Naive thymus-derived CD4-positive, alpha-beta T cell (primary cell): ENCODE measurements at regions of chr16 and their contacts with region 1.

Region 1: GRCh38 chr16:84738255-84739038 is 38.6 kb downstream of the USP10 start:
- DNase-seq: peak; percentile 49 to 77 (median 72)
- ATAC-seq: peak; percentile 85
- H3K4me3 ChIP-seq: no peak overlapping the region
- H3K4me3 Mint-ChIP-seq: peak overlapping the region in 6 of 10 donors; percentile 6 to 76 (median 38)
- H3K27ac ChIP-seq: no peak overlapping the region
- H3K27ac Mint-ChIP-seq: peak overlapping the region in 8 of 9 donors; percentile 21 to 81 (median 64)
- H3K4me1 ChIP-seq: peaks cover 0 to 23% of the 10 kb centered on the region in 2 donors
- H3K4me1 Mint-ChIP-seq: peaks cover 38 to 61% (median 55%) of the 10 kb centered on the region in 7 donors
- H3K27me3 ChIP-seq: no peaks in the 10 kb centered on the region
- H3K27me3 Mint-ChIP-seq: no peaks in the 10 kb centered on the region

Region 2: GRCh38 chr16:84103678-84104077 is 634.8 kb before region 1 on chr16:
- CTCF ChIA-PET with region 1: no interaction called
- POLR2A ChIA-PET with region 1: no interaction called
- intact Hi-C with region 1: no loop called
- DNase-seq: no peak
- ATAC-seq: no peak
- H3K4me3 ChIP-seq: no peak overlapping the region
- H3K4me3 Mint-ChIP-seq: no peak overlapping the region
- H3K27ac ChIP-seq: no peak overlapping the region
- H3K27ac Mint-ChIP-seq: peak overlapping the region in 3 of 9 donors; percentile 4 to 34 (median 20)
- H3K4me1 ChIP-seq: peaks cover 0 to 4% of the 10 kb centered on the region in 2 donors
- H3K4me1 Mint-ChIP-seq: peaks cover 30 to 76% (median 66%) of the 10 kb centered on the region in 7 donors
- H3K27me3 ChIP-seq: no peaks in the 10 kb centered on the region
- H3K27me3 Mint-ChIP-seq: no peaks in the 10 kb centered on the region

Region 3: DNA sequence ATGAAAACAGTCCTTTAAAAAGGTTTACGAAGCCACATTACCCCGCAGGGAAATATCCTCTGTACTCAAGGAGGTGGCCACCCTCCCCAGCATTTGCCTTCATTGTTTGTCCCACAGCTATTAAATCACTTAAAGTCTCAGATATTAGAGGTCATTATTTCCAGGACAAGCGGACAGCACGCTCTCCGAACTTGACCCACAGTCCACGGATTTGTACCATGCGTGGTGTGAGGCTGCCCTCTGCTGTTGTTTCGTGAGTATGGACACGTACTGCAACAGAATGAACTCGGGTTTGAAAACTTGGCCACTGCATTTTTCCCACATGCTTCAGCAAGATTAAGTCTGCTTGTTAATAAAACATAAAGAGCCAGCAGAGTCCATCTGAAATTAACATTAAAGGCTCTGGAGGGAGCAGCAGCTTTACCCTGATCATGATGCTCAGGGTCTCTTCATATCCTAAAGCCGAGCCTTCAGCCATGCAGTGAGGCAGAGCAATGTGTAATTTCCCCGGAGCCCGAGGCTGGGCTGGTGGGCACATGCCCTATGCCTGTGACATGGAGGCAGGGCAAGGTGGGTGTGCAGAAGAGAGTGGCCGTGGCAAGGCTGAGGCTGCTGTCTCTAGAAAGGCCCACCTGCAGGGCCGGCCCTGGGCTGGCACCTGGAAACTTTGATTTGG is 253.7 kb before region 1 on chr16:
- CTCF ChIA-PET with region 1: no interaction called
- POLR2A ChIA-PET with region 1: no interaction called
- intact Hi-C with region 1: no loop called
- DNase-seq: peak in 1 of 9 donors; percentile 23
- ATAC-seq: no peak
- H3K4me3 ChIP-seq: no peak overlapping the region
- H3K4me3 Mint-ChIP-seq: no peak overlapping the region
- H3K27ac ChIP-seq: no peak overlapping the region
- H3K27ac Mint-ChIP-seq: no peak overlapping the region
- H3K4me1 ChIP-seq: no peaks in the 10 kb centered on the region
- H3K4me1 Mint-ChIP-seq: peaks cover 0 to 2% (median 0%) of the 10 kb centered on the region in 7 donors
- H3K27me3 ChIP-seq: no peaks in the 10 kb centered on the region
- H3K27me3 Mint-ChIP-seq: no peaks in the 10 kb centered on the region

Region 4: DNA sequence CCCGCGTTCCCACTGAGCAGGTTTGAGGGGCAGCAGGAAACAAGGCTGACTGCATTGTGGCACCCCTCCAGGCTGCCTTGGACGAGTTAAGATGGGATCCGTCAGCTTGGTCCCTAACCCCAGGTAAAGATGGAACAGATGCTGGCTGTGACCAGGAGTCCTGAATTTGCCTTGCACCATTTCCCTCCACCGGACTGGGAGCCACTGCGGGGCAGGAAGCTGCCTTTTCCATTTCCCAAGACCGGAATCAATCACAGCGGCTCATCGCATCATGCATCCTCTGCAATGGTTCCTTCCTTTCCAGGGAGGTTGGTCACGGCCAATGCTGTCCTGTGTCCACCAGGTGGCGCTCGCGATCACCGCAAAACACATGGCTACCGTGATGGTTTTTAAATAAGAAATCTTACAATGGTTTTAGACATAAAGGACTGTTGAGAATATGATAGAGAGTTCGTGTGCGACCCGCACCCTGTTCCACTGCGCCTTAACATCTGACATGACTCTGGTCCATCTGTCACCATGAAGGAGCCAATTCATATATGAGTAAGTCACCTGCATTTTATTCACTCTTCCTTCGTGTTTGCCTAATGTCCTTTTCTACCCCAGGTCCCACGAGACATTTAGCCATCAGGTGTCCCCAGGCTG is 227.1 kb before region 1 on chr16:
- CTCF ChIA-PET with region 1: interaction called, 18 read pairs
- POLR2A ChIA-PET with region 1: interaction called, 3 read pairs
- intact Hi-C with region 1: loop called in 1 of 2 experiments (anchors 1 kb)
- DNase-seq: peak; percentile 55 to 88 (median 79)
- ATAC-seq: peak; percentile 62
- H3K4me3 ChIP-seq: no peak overlapping the region
- H3K4me3 Mint-ChIP-seq: peak overlapping the region in 9 of 10 donors; percentile 11 to 71 (median 62)
- H3K27ac ChIP-seq: no peak overlapping the region
- H3K27ac Mint-ChIP-seq: peak overlapping the region; percentile 55 to 94 (median 82)
- H3K4me1 ChIP-seq: peaks cover 53 to 77% of the 10 kb centered on the region in 2 donors
- H3K4me1 Mint-ChIP-seq: peaks cover 48 to 79% (median 74%) of the 10 kb centered on the region in 7 donors
- H3K27me3 ChIP-seq: no peaks in the 10 kb centered on the region
- H3K27me3 Mint-ChIP-seq: no peaks in the 10 kb centered on the region

Region 5: GRCh38 chr16:84672276-84673202 is 65.9 kb before region 1 on chr16:
- CTCF ChIA-PET with region 1: interaction called, 13 read pairs
- POLR2A ChIA-PET with region 1: interaction called, 3 read pairs
- intact Hi-C with region 1: loop called (anchors 1 kb)
- DNase-seq: peak; percentile 58 to 85 (median 74)
- ATAC-seq: peak; percentile 96
- H3K4me3 ChIP-seq: no peak overlapping the region
- H3K4me3 Mint-ChIP-seq: no peak overlapping the region
- H3K27ac ChIP-seq: no peak overlapping the region
- H3K27ac Mint-ChIP-seq: peak overlapping the region in 3 of 9 donors; percentile 6 to 54 (median 52)
- H3K4me1 ChIP-seq: no peaks in the 10 kb centered on the region
- H3K4me1 Mint-ChIP-seq: peaks cover 5 to 17% (median 8%) of the 10 kb centered on the region in 7 donors
- H3K27me3 ChIP-seq: no peaks in the 10 kb centered on the region
- H3K27me3 Mint-ChIP-seq: peaks cover 0 to 19% (median 0%) of the 10 kb centered on the region in 5 donors

Region 6: DNA sequence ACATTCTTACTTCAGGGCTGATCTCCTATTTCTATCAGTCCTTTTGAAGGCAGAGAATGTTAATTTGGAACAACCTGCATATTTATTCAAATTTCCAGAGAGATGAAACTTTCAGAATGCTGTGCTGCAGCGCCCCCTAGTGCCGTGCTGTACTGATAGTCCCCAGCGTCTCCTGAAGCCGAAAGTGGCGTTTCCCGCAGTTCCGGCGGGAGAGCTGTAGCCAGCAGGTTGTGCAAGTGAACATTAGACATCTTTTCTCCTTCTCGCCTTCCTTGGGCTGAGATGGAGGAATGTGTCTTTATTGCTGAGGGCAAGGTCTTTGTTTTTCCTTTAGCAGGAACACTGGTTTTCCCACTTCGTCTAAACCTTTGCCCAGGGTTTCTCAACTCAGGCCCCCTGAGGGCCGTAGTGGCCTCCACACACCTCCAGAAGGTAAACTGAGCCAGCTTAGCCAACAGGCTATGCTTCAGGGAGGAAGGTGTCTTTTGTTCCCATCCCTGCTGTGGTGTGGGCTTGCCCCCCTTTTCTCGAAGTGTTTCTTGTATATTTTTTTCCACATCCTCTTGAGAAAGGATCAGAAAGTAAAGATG is 12.3 kb before region 1 on chr16:
- CTCF ChIA-PET with region 1: interaction called, 19 read pairs
- POLR2A ChIA-PET with region 1: interaction called, 7 read pairs
- intact Hi-C with region 1: loop called in 1 of 2 experiments (anchors 1 kb)
- DNase-seq: peak; percentile 61 to 83 (median 74)
- ATAC-seq: peak; percentile 92
- H3K4me3 ChIP-seq: no peak overlapping the region
- H3K4me3 Mint-ChIP-seq: peak overlapping the region in 8 of 10 donors; percentile 54 to 76 (median 60)
- H3K27ac ChIP-seq: no peak overlapping the region
- H3K27ac Mint-ChIP-seq: peak overlapping the region in 4 of 9 donors; percentile 6 to 41 (median 31)
- H3K4me1 ChIP-seq: peaks cover 8 to 26% of the 10 kb centered on the region in 2 donors
- H3K4me1 Mint-ChIP-seq: peaks cover 55 to 83% (median 69%) of the 10 kb centered on the region in 7 donors
- H3K27me3 ChIP-seq: no peaks in the 10 kb centered on the region
- H3K27me3 Mint-ChIP-seq: no peaks in the 10 kb centered on the region

Region 7: DNA sequence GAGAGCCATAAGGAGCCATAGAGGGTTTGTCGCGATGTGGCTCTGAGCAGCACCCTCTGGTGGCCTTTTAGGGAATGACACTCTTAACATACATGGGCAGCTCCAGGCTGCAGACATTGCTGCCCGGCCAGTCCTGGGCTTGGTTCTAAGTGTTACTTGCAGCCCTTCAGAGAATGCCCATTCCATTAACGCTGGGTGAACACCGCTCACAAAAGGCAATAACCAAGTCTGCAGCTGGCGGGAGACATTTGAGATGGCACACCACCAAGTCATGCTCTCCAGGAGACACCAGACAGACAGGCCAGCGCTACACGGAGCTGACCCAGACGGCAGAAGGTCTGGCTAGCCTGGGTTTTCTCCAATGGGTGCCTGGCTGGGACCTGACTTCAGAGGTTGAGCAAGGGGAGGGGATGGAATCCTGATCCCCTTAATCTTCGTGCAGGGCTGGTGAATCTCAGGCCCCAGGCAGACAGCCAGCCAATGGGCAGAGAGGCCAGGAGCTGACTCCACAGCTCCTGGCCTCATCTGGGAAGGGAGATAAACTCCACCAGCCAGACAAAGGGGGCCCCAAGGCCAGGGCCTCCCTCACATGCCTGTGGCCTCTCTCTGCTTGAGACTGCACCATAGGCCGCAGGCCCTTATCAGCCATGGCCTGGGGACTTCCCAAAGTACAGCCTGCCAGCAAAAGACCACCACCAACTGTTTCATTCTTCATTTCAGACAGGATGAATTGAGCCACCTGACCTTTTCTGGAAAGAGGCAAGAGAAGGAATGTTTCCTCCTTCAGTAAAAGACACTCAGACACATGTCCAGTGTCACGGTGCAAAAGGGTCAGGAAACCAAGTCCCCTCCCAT is 214.1 kb after region 1 on chr16:
- CTCF ChIA-PET with region 1: interaction called, 5 read pairs
- POLR2A ChIA-PET with region 1: no interaction called
- intact Hi-C with region 1: loop called in 1 of 2 experiments (anchors 1 kb)
- DNase-seq: peak; percentile 28 to 80 (median 68)
- ATAC-seq: peak; percentile 94
- H3K4me3 ChIP-seq: no peak overlapping the region
- H3K4me3 Mint-ChIP-seq: no peak overlapping the region
- H3K27ac ChIP-seq: no peak overlapping the region
- H3K27ac Mint-ChIP-seq: peak overlapping the region in 1 of 9 donors; percentile 9
- H3K4me1 ChIP-seq: peaks cover 0 to 3% of the 10 kb centered on the region in 2 donors
- H3K4me1 Mint-ChIP-seq: peaks cover 0 to 12% (median 4%) of the 10 kb centered on the region in 7 donors
- H3K27me3 ChIP-seq: no peaks in the 10 kb centered on the region
- H3K27me3 Mint-ChIP-seq: peaks cover 0 to 4% (median 0%) of the 10 kb centered on the region in 5 donors

Region 8: DNA sequence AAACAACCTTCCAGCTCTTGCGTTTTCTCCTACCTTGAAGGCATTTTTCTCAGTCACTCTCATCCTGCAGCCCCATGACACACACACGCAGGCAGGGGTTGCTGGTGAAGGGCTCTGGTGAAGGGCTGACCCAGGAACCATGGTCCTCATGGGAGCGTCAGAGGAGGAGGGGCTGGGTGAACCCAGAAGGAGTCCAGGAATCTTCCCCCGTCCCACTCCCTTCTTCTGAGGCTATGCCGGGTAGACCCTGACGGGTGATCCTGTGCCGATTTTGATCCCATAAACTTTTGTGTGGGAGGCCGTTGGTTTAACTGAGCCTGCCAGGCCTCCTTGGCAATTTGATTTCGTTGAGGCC is 1493.5 kb after region 1 on chr16:
- CTCF ChIA-PET with region 1: no interaction called
- POLR2A ChIA-PET with region 1: no interaction called
- intact Hi-C with region 1: no loop called
- DNase-seq: no peak
- ATAC-seq: no peak
- H3K4me3 ChIP-seq: no peak overlapping the region
- H3K4me3 Mint-ChIP-seq: no peak overlapping the region
- H3K27ac ChIP-seq: no peak overlapping the region
- H3K27ac Mint-ChIP-seq: no peak overlapping the region
- H3K4me1 ChIP-seq: no peaks in the 10 kb centered on the region
- H3K4me1 Mint-ChIP-seq: no peaks in the 10 kb centered on the region
- H3K27me3 ChIP-seq: no peaks in the 10 kb centered on the region
- H3K27me3 Mint-ChIP-seq: peaks cover 0 to 57% (median 25%) of the 10 kb centered on the region in 5 donors